H1 (cell line): ENCODE measurements at regions of chr1 and their contacts with region 1.

Region 1: DNA sequence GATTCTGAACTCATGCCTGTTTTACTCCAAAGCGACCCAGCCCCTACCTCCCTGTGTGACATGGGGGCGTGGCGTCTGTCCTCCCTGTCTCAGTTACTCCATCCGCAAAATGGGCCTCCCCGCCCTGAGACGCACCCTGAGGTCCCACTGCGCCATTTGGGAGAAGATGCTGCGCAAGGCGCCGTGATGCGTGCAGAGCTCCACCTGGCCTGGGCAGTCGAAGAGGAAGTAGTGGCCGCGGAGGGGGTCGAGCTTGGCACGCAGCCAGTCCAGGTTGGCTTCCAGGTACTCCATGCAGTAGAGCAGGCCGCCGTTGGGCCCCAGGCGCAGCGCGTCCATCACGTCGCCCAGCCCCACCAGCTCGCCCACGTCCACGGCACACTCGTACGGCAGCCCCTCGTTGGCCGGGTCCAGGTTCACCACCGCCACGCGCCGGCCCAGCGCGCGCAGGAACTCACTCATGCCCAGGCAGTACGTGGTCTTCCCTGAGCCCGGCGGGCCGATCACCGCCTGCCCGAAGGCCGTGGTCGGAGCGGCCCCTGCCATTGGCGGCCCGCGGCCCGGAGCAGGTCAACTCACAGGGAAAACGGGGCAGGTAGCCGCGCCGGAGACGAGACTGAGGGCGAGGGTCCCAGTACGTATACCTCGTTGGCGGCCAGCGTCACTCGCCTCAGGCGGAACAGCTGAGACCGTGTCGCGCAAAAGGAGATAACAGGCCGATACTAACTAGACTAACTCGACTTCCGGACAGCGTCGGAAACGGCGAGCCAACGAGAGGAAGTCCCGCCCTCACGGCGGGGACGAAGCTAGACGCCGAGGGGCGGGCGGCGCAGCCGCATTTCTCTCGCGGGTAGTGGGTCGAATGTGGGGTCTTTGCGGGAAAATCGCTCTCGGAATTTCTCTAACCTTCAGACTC is at the start of gene GPN2:
- DNase-seq: peak in 1 of 2 experiments; percentile 85
- H3K4me3 ChIP-seq: peak within 1 kb of the TSS; percentile 77 to 80 (median 80)
- H3K27ac ChIP-seq: peak within 1 kb of the TSS; percentile 58
- H3K4me1 ChIP-seq: peaks cover 0 to 8% (median 3%) of the 10 kb centered on the region in 4 experiments; a peak in 3 of 7 replicates
- H3K27me3 ChIP-seq: no peaks in the 10 kb centered on the region
- CTCF ChIP-seq: no peak
- EP300 ChIP-seq: no peak
- POLR2A ChIP-seq: peak; percentile 74 to 84
- RAD21 ChIP-seq: no peak
- total RNA-seq, gene GPN2: 29.6 and 36.8 TPM in 2 replicates

Region 2: DNA sequence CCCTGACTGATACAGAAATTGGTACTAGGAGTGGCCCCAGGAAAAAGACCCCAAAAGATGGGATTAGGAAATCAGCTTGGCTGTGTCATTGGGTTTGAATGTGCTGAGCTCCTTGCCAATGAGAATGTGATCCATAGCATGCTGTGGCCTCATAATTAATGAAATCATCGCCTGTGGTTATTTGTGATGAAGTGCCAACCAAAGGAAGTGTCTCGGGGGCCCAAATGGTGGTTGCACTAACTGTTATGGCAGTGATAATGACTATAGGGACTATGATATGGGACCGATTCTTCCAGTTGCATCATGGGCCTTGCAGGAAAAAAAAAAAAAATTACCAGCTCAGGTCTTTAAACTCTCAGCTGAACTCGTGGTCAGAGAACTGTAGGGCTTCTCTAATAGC is 78.8 kb before region 1 on chr1:
- CTCF ChIA-PET with region 1: interaction called, 11 read pairs
- POLR2A ChIA-PET with region 1: no interaction called
- DNase-seq: no peak
- H3K4me3 ChIP-seq: no peak overlapping the region
- H3K27ac ChIP-seq: no peak overlapping the region
- H3K4me1 ChIP-seq: no peaks in the 10 kb centered on the region
- H3K27me3 ChIP-seq: no peaks in the 10 kb centered on the region
- CTCF ChIP-seq: no peak
- EP300 ChIP-seq: no peak
- POLR2A ChIP-seq: no peak
- RAD21 ChIP-seq: no peak

Region 3: DNA sequence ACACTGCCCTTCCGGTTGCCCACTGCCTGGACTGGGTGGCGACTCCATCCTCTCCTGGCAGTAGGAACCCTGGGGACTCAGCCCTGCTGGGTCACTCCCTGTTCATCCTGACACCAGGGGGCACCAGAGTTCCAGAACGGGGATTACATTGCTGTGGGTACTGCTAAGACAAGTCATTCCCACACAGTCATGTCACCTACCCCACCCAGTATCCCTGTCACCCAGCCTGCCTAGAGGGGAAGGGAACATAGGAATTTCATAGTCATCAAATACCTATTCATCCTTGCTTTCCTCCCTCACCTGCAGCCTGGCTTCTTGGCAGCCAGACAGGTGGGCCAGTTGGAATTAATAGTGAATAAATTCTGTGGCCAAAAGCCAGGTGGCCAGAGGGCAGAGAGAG is 36.7 kb before region 1 on chr1:
- CTCF ChIA-PET with region 1: interaction called, 547 read pairs
- POLR2A ChIA-PET with region 1: interaction called, 7 read pairs
- DNase-seq: peak in 1 of 2 experiments; percentile 94
- H3K4me3 ChIP-seq: no peak overlapping the region
- H3K27ac ChIP-seq: no peak overlapping the region
- H3K4me1 ChIP-seq: peaks cover 0 to 10% (median 6%) of the 10 kb centered on the region in 4 experiments; a peak in 6 of 7 replicates
- H3K27me3 ChIP-seq: no peaks in the 10 kb centered on the region
- CTCF ChIP-seq: peak; percentile 85 to 87 (median 85)
- EP300 ChIP-seq: no peak
- POLR2A ChIP-seq: no peak
- RAD21 ChIP-seq: peak; percentile 74 to 83

Region 4: DNA sequence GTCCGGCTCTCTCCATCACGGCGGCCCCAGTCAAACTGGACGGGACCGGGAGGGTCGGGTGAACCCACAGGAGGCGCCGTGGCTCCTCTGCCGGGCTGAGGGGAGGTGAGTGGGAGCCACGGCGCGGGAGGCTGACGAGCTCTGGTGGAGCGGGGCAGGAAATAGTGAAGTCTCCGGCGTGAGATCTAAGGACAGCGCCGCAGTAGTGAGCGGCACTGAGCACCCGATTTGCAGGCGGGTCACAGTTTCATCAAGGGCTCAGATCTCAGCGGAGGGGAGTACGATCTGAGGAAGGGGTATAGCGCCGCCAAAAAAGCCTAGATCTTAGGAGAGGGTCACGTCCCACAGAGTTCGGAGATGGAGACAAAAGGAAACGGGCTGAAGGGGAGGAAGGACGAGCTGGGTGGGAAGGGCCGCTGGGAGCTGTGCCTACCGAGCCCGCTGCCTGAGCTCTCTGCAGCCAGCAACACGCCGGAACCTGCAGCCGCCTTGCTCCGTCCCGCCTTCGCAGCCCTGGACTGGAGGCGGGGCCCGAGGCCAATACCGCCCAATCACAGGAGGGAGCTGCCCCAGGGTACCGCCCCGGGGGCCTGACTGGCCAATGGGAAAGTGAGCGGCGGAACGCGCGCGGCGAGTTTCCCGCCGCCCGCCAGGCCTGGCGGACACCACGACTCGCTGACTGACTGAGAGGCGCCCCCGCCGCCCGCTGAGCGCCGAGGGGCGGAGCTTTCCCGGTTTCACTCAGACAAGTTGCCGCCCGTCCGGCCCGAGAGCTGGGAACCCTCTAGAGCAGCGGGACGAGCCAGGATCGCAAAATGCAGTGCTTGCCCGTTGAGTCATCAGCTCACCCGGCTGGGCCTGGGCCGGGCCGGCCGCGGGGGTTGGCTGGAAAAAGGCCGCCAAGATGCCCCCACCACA is 24.9 kb before region 1 on chr1:
- CTCF ChIA-PET with region 1: interaction called, 547 read pairs
- POLR2A ChIA-PET with region 1: interaction called, 11 read pairs
- DNase-seq: peak; percentile 95 to 97
- H3K4me3 ChIP-seq: peak overlapping the region; percentile 58 to 68 (median 62)
- H3K27ac ChIP-seq: peak overlapping the region; percentile 52; the same call in 1 of the 2 replicates
- H3K4me1 ChIP-seq: peaks cover 0 to 27% (median 21%) of the 10 kb centered on the region in 4 experiments; a peak in 5 of 7 replicates
- H3K27me3 ChIP-seq: peaks cover 4 to 13% (median 12%) of the 10 kb centered on the region in 4 experiments; a peak in 5 of 7 replicates
- CTCF ChIP-seq: no peak; a peak in 1 of 4 replicates
- EP300 ChIP-seq: no peak
- POLR2A ChIP-seq: peak; percentile 76 to 83
- RAD21 ChIP-seq: no peak

Region 5: DNA sequence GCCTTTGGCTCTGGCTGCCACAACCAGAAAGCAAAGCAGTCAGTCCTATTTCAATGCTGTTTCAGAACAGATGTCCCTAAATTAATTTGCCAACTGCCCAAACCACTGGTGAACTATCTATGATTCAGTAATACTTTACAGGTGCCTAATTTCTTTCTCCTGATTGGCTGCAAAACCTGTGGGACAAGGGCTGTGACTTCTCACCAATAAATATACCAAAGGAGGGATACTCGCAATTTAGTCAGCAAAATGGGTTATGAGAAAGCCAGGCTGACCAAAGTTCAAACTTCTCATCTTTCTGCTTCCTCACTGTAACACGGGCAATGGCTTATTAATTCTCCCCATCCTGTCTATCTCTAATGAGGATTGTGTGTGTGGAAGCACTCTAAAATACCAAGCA is 12.5 kb before region 1 on chr1:
- CTCF ChIA-PET with region 1: interaction called, 547 read pairs
- POLR2A ChIA-PET with region 1: interaction called, 5 read pairs
- DNase-seq: no peak
- H3K4me3 ChIP-seq: no peak overlapping the region
- H3K27ac ChIP-seq: no peak overlapping the region
- H3K4me1 ChIP-seq: peaks cover 0 to 2% (median 0%) of the 10 kb centered on the region in 4 experiments; a peak in 1 of 7 replicates
- H3K27me3 ChIP-seq: no peaks in the 10 kb centered on the region
- CTCF ChIP-seq: no peak
- EP300 ChIP-seq: no peak
- POLR2A ChIP-seq: no peak
- RAD21 ChIP-seq: no peak

Region 6: GRCh38 chr1:26900001-26900814 is 10.4 kb after region 1 on chr1 and contains the start of gene GPATCH3:
- CTCF ChIA-PET with region 1: interaction called, 27 read pairs
- POLR2A ChIA-PET with region 1: interaction called, 66 read pairs
- DNase-seq: peak; percentile 71 to 91
- H3K4me3 ChIP-seq: peak within 1 kb of the TSS; percentile 90 to 98 (median 96)
- H3K27ac ChIP-seq: peak within 1 kb of the TSS; percentile 88
- H3K4me1 ChIP-seq: peaks cover 0 to 8% (median 3%) of the 10 kb centered on the region in 4 experiments; a peak in 3 of 7 replicates
- H3K27me3 ChIP-seq: no peaks in the 10 kb centered on the region
- CTCF ChIP-seq: no peak
- EP300 ChIP-seq: no peak
- POLR2A ChIP-seq: peak; percentile 89 to 98
- RAD21 ChIP-seq: no peak
- total RNA-seq, gene GPATCH3: 17.4 and 19.8 TPM in 2 replicates

Region 7: GRCh38 chr1:26907071-26907917 is 17.5 kb after region 1 on chr1:
- CTCF ChIA-PET with region 1: no interaction called
- POLR2A ChIA-PET with region 1: interaction called, 11 read pairs
- DNase-seq: no peak
- H3K4me3 ChIP-seq: no peak overlapping the region
- H3K27ac ChIP-seq: no peak overlapping the region
- H3K4me1 ChIP-seq: no peaks in the 10 kb centered on the region
- H3K27me3 ChIP-seq: peaks cover 0 to 2% (median 0%) of the 10 kb centered on the region in 4 experiments; a peak in 1 of 7 replicates
- CTCF ChIP-seq: no peak
- EP300 ChIP-seq: no peak
- POLR2A ChIP-seq: no peak
- RAD21 ChIP-seq: no peak

Region 8: DNA sequence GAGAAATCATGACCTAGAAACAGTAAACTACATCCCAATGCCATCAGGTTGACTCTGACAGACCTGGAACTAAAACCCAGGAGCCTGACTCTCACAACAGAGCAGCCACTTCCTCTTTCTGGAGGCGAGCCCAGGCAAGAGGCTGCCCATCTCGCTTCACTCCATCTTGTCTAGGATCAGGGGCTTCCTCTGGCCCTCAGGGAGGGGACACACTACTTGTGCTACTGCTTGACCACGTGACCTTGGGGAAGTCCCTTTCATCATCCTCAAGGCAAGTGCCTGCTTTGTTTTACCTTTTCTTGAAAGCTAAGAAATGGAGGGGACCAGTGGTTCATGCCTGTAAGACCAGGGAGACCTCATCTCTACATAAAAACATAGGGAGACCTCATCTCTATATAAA is 125.5 kb after region 1 on chr1:
- CTCF ChIA-PET with region 1: no interaction called
- POLR2A ChIA-PET with region 1: no interaction called
- DNase-seq: no peak
- H3K4me3 ChIP-seq: no peak overlapping the region
- H3K27ac ChIP-seq: no peak overlapping the region
- H3K4me1 ChIP-seq: peaks cover 0 to 9% (median 7%) of the 10 kb centered on the region in 4 experiments; a peak in 6 of 7 replicates
- H3K27me3 ChIP-seq: no peaks in the 10 kb centered on the region; a peak in 1 of 7 replicates
- CTCF ChIP-seq: no peak
- EP300 ChIP-seq: no peak
- POLR2A ChIP-seq: no peak
- RAD21 ChIP-seq: no peak